ENCODE measurements at regions of chr18 and their contacts with region 1.

Region 1: GRCh38 chr18:24271381-24272331 is 126.0 kb downstream of the OSBPL1A start:
- DNase-seq: peak; percentile 71 to 79
- ATAC-seq: peak; percentile 84 to 92 (median 88)
- H3K4me3 ChIP-seq: peak overlapping the region; percentile 76 to 94 (median 84)
- H3K27ac ChIP-seq: peak overlapping the region; percentile 89 to 97 (median 94)
- H3K4me1 ChIP-seq: peaks cover 0 to 59% (median 38%) of the 10 kb centered on the region in 9 donors
- H3K27me3 ChIP-seq: peaks cover 0 to 4% (median 0%) of the 10 kb centered on the region in 7 donors
- CTCF ChIP-seq: peak in 6 of 9 donors; percentile 11 to 49 (median 31)

Region 2: GRCh38 chr18:24176727-24177416 is 94.8 kb before region 1 on chr18:
- intact Hi-C with region 1: loop called (anchors 2 to 10 kb)
- DNase-seq: peak; percentile 29 to 67
- ATAC-seq: peak; percentile 58 to 85 (median 81)
- H3K4me3 ChIP-seq: no peak overlapping the region
- H3K27ac ChIP-seq: no peak overlapping the region
- H3K4me1 ChIP-seq: peaks cover 0 to 14% (median 5%) of the 10 kb centered on the region in 9 donors
- H3K27me3 ChIP-seq: no peaks in the 10 kb centered on the region
- CTCF ChIP-seq: peak; percentile 64 to 86 (median 80)

Region 3: GRCh38 chr18:24189007-24189528 is 82.6 kb before region 1 on chr18:
- intact Hi-C with region 1: loop called in 3 of 10 experiments (anchors 5 to 10 kb)
- DNase-seq: no peak
- ATAC-seq: peak in 6 of 8 donors; percentile 24 to 58 (median 46)
- H3K4me3 ChIP-seq: no peak overlapping the region
- H3K27ac ChIP-seq: no peak overlapping the region
- H3K4me1 ChIP-seq: peaks cover 0 to 33% (median 25%) of the 10 kb centered on the region in 9 donors
- H3K27me3 ChIP-seq: no peaks in the 10 kb centered on the region
- CTCF ChIP-seq: no peak

Region 4: GRCh38 chr18:24200494-24201290 is 71.0 kb before region 1 on chr18:
- intact Hi-C with region 1: loop called in 1 of 10 experiments (anchors 5 kb)
- DNase-seq: no peak
- ATAC-seq: peak in 6 of 8 donors; percentile 29 to 86 (median 49)
- H3K4me3 ChIP-seq: no peak overlapping the region
- H3K27ac ChIP-seq: peak overlapping the region in 7 of 10 donors; percentile 4 to 57 (median 25)
- H3K4me1 ChIP-seq: peaks cover 0 to 27% (median 20%) of the 10 kb centered on the region in 9 donors
- H3K27me3 ChIP-seq: no peaks in the 10 kb centered on the region
- CTCF ChIP-seq: no peak

Region 5: DNA sequence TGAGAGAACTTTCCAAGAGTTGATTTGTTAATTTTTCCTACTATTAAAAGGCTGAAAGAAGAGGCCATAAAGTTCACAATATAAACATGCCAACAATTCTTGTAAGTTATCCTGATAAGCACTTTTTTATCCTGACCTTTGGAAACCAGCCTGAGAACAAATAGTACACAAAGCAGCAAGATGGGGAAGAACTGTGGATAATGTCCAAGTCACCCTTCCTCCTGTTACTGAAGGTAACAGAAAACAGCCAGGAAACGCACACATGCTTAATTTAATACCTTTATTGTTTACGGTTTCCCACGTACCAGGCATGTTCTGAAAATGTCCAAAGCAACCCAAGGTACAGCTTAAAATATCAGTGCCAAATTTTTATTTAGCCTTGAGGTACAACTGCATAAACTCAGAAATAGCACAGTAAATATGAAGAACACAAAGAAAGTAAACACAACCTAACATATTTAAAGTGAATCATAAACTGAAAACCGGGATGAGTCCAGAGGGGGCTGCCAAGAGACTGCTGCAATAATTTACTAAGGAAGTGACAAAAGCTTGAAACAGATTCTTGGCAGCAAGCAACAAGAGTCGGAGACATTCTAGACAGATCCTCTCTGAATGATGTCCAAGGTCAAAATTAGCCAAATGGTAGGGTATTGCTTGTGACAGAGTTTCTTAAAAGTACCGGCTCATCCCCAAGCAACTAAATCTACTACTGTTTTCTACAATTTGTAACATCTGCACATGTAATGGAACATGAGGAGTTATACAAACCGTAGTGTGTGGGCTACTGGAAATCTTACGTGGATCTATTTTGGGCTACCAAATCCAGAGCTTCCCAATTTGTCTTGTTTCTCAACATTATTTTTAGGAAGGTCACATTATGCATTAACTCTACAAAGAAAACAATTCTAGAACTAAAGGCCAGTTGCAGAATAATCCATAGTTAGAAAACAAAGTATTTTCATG is 39.6 kb before region 1 on chr18:
- intact Hi-C with region 1: loop called in 5 of 10 experiments (anchors 5 to 10 kb)
- DNase-seq: peak in 1 of 2 donors; percentile 24
- ATAC-seq: peak; percentile 58 to 83 (median 69)
- H3K4me3 ChIP-seq: peak overlapping the region in 2 of 10 donors; percentile 0 to 16
- H3K27ac ChIP-seq: peak overlapping the region; percentile 51 to 85 (median 65)
- H3K4me1 ChIP-seq: peaks cover 4 to 75% (median 50%) of the 10 kb centered on the region in 9 donors
- H3K27me3 ChIP-seq: no peaks in the 10 kb centered on the region
- CTCF ChIP-seq: no peak